Posterior vena cava (tissue), 2 donors: ENCODE measurements at regions of chr15 and their contacts with region 1.

Region 1: DNA sequence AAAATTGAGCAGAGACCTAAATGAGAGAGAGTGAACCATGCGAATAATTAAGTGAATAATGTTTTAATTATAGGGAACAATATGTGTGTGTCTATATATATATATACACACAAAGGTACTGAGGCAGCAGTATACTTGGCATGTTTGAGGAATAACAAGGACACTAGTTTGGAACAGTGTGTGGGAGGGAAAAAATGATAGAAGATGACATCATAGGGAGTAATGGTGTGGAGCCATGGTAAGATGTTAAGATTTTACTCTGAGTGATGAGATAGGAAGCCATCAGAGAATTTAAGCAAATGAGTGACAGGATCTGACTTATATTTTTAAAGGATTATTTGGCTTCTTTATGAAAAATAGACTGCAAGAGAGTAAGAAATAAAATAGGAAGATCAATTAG is 29.1 kb downstream of the DTWD1 start:
- DNase-seq: no peak

Region 2: DNA sequence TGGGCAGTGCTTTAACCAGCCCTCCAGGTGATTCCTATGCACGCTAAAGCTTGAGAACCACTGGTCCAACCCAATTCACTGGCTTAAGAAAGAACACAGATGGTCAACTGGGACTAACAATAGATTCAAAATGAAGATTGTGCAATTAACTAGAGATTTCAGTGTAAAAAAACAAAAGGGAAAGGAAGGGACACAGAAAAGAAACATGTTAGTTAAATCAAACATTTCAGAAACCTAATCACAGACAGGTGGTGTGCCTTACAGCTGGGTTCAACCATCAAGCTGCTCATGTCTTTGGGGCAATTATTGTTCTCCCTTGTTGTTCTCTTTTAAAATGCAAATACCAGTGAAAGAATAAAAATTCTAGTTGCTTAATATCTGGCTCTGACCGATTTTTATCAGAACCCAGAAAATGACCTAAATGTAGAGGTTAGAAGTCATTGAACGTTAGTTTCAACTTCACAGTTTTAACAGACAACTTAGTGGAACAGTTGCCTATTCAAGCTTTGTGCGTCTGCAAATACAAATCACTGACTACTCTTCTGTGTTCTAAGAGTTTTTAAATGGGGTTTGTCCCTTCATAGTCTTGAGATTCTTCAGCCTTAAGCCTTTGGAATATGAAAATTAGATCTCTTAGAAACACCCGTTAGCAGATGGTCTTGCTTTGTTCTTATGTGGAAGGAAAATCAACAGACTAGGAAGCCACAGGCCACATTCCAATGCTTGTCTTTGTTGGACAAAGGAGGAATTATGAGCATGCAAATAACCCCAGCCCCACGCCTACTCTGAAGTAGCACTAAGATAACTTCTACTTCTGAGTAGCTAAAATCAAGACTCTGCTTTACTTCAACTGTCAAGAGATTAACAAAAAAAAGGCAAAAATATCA is 245.6 kb after region 1 on chr15:
- intact Hi-C with region 1: loop called in 1 of 2 experiments (anchors 10 kb)
- DNase-seq: no peak